ENCODE measurements at regions of chr20 and their contacts with region 1.

Region 1: DNA sequence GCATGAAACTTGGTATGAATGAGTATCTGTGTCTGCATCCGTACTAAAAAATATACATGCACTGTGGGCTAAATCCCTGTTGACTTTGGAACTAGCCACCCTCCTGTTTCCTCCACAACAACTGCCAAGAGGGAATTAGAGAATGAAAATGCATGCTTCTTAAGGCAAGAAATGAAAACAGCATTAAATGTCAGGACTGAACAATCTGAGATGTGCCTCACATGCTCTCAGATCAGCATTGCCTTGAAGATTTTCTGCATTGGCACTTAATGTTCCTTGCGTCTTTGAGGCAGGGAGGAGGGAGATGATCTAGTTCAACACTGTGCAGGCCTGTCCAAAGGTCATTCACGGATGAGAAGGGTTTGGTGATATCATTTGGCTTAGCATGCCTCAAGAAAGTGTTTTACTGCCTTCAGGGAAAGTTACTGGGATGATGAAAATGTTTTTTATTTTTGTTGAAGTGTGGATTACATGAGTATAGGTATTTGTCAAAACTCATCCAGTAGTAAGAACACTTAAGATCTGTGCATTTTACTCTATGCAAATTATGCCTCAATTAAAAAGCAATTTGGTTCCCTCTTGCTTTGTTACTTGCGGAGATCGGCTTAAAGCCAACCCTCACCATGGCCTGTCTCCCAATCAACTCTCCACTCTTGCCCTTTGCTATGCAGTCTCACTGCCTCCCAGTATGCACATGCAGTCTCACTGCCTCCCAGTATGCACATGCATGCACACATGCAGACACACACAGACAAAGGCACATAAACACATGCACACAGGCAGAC is 47.5 kb upstream of the RIN2 start:
- DNase-seq: no peak
- ATAC-seq: peak; percentile 42
- H3K4me3 ChIP-seq: no peak overlapping the region
- H3K27ac ChIP-seq: no peak overlapping the region
- H3K4me1 ChIP-seq: peaks cover 18% of the 10 kb centered on the region
- H3K27me3 ChIP-seq: no peaks in the 10 kb centered on the region
- CTCF ChIP-seq: no peak

Region 2: DNA sequence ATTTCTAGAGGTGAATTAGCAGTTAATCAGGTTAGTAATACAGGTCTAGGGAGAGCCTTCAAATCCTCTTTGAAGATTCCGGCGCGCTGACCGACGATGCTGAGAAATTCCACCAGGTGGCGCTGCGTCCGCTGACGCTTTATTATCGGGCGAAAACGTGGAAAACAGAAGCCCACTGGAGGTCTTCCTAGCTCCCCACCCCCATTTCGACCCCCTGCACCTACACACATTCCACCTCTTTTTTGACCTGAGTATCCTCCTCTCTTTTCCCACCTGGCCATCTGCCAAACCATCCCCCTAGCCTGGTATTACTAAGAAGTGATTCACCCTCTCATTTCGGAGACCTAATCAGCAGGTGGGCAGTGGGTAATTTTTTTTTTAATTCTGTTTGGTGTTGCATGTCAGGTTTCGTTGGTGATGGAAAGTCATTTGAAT is 17.8 kb before region 1 on chr20:
- CTCF ChIA-PET with region 1: no interaction called
- POLR2A ChIA-PET with region 1: no interaction called
- intact Hi-C with region 1: loop called (anchors 1 kb)
- DNase-seq: peak; percentile 82
- ATAC-seq: peak; percentile 53
- H3K4me3 ChIP-seq: peak overlapping the region; percentile 37
- H3K27ac ChIP-seq: peak overlapping the region; percentile 86
- H3K4me1 ChIP-seq: peaks cover 46% of the 10 kb centered on the region
- H3K27me3 ChIP-seq: no peaks in the 10 kb centered on the region
- CTCF ChIP-seq: peak; percentile 98

Region 3: GRCh38 chr20:19735446-19735845 is 24.9 kb after region 1 on chr20:
- CTCF ChIA-PET with region 1: interaction called, 3 read pairs
- POLR2A ChIA-PET with region 1: no interaction called
- intact Hi-C with region 1: loop called (anchors 1 kb)
- DNase-seq: peak; percentile 97
- ATAC-seq: peak; percentile 90
- H3K4me3 ChIP-seq: 0 out of 2 replicates have a peak overlapping the region, but pooled peaks have one; percentile 3
- H3K27ac ChIP-seq: peak overlapping the region; percentile 96
- H3K4me1 ChIP-seq: peaks cover 48% of the 10 kb centered on the region
- H3K27me3 ChIP-seq: no peaks in the 10 kb centered on the region
- CTCF ChIP-seq: no peak

Region 4: GRCh38 chr20:19775360-19776253 is 65.1 kb after region 1 on chr20:
- CTCF ChIA-PET with region 1: no interaction called
- POLR2A ChIA-PET with region 1: interaction called, 5 read pairs
- intact Hi-C with region 1: loop called (anchors 5 kb)
- DNase-seq: peak; percentile 93
- ATAC-seq: peak; percentile 98
- H3K4me3 ChIP-seq: no peak overlapping the region
- H3K27ac ChIP-seq: peak overlapping the region; percentile 51
- H3K4me1 ChIP-seq: peaks cover 44% of the 10 kb centered on the region
- H3K27me3 ChIP-seq: no peaks in the 10 kb centered on the region
- CTCF ChIP-seq: no peak

Region 5: DNA sequence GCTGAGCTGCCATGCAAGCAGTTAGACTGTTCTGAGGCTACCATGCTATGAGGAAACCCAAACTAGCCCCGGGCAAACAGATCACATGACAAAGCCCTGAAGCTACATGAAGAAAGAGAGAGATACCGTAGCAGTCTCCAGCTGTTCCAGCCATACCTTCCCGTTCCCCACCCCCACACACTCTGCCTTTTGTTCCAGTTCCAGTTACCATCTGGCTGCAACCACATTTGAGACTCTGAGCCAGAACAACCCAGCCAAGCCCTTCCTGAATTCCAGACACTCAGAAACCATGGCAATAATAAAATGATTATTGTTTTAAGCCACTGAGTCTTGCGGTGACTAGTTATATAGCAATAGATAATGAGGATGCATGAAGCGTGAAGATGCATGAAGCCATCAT is 75.8 kb after region 1 on chr20:
- CTCF ChIA-PET with region 1: no interaction called
- POLR2A ChIA-PET with region 1: no interaction called
- intact Hi-C with region 1: no loop called
- DNase-seq: peak; percentile 75
- ATAC-seq: peak; percentile 4; the same call in 1 of the 2 replicates
- H3K4me3 ChIP-seq: no peak overlapping the region
- H3K27ac ChIP-seq: peak overlapping the region; percentile 91
- H3K4me1 ChIP-seq: peaks cover 44% of the 10 kb centered on the region
- H3K27me3 ChIP-seq: no peaks in the 10 kb centered on the region
- CTCF ChIP-seq: no peak

Region 6: GRCh38 chr20:19947611-19948264 is 237.2 kb after region 1 on chr20:
- CTCF ChIA-PET with region 1: no interaction called
- POLR2A ChIA-PET with region 1: no interaction called
- intact Hi-C with region 1: no loop called
- DNase-seq: peak; percentile 30
- ATAC-seq: peak; percentile 69
- H3K4me3 ChIP-seq: no peak overlapping the region
- H3K27ac ChIP-seq: no peak overlapping the region
- H3K4me1 ChIP-seq: peaks cover 12% of the 10 kb centered on the region
- H3K27me3 ChIP-seq: no peaks in the 10 kb centered on the region
- CTCF ChIP-seq: no peak

Measured in PC-3 (cell line).